Spleen (tissue), 13 donors: ENCODE measurements at regions of chr9 and their contacts with region 1.

Region 1: GRCh38 chr9:73667717-73668116 is 516.1 kb downstream of the ANXA1 start:
- DNase-seq: no peak
- H3K4me3 ChIP-seq: no peak overlapping the region
- H3K27ac ChIP-seq: no peak overlapping the region
- H3K4me1 ChIP-seq: no peaks in the 10 kb centered on the region
- H3K27me3 ChIP-seq: no peaks in the 10 kb centered on the region
- CTCF ChIP-seq: no peak
- POLR2A ChIP-seq: no peak

Region 2: GRCh38 chr9:73474625-73475024 is 193.1 kb before region 1 on chr9:
- intact Hi-C with region 1: no loop called
- DNase-seq: no peak
- H3K4me3 ChIP-seq: no peak overlapping the region
- H3K27ac ChIP-seq: no peak overlapping the region
- H3K4me1 ChIP-seq: no peaks in the 10 kb centered on the region
- H3K27me3 ChIP-seq: no peaks in the 10 kb centered on the region
- CTCF ChIP-seq: no peak
- POLR2A ChIP-seq: no peak

Region 3: DNA sequence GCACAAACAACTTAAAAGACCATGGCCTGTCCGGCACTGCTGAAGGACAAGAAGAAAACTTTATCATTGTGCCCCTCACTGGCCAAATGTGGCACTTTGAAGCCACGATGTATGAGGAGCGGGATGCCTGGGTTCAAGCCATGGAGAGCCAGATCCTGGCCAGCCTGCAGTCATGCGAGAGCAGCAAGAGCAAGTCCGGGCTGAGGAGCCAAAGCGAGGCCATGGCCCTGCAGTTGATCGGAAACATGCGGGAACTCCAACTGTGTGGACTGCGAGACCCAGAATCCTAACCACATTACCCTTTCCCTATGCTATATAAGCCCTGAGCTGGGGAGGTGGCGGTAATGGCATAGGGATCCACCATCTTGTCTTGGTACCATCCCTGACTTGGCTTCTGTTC is 18.2 kb before region 1 on chr9:
- intact Hi-C with region 1: loop called (anchors 2 kb)
- DNase-seq: no peak
- H3K4me3 ChIP-seq: no peak overlapping the region
- H3K27ac ChIP-seq: no peak overlapping the region
- H3K4me1 ChIP-seq: no peaks in the 10 kb centered on the region
- H3K27me3 ChIP-seq: no peaks in the 10 kb centered on the region
- CTCF ChIP-seq: no peak
- POLR2A ChIP-seq: no peak